Calu3 (cell line): ENCODE measurements at regions of chr3 and their contacts with region 1.

Region 1: GRCh38 chr3:169390271-169391230 is 273.0 kb downstream of the MECOM start:
- DNase-seq: peak; percentile 66
- H3K4me3 Mint-ChIP-seq: peak overlapping the region; percentile 41
- H3K27ac Mint-ChIP-seq: peak overlapping the region; percentile 94
- H3K4me1 Mint-ChIP-seq: peaks cover 47% of the 10 kb centered on the region
- H3K27me3 Mint-ChIP-seq: no peaks in the 10 kb centered on the region
- CTCF ChIP-seq: peak; percentile 50

Region 2: GRCh38 chr3:168865022-168865551 is 525.5 kb before region 1 on chr3:
- CTCF ChIA-PET with region 1: no interaction called
- intact Hi-C with region 1: loop called (anchors 10 kb)
- DNase-seq: peak; percentile 34
- H3K4me3 Mint-ChIP-seq: peak overlapping the region; percentile 49
- H3K27ac Mint-ChIP-seq: no peak overlapping the region
- H3K4me1 Mint-ChIP-seq: peaks cover 90% of the 10 kb centered on the region
- H3K27me3 Mint-ChIP-seq: no peaks in the 10 kb centered on the region
- CTCF ChIP-seq: peak; percentile 89

Region 3: DNA sequence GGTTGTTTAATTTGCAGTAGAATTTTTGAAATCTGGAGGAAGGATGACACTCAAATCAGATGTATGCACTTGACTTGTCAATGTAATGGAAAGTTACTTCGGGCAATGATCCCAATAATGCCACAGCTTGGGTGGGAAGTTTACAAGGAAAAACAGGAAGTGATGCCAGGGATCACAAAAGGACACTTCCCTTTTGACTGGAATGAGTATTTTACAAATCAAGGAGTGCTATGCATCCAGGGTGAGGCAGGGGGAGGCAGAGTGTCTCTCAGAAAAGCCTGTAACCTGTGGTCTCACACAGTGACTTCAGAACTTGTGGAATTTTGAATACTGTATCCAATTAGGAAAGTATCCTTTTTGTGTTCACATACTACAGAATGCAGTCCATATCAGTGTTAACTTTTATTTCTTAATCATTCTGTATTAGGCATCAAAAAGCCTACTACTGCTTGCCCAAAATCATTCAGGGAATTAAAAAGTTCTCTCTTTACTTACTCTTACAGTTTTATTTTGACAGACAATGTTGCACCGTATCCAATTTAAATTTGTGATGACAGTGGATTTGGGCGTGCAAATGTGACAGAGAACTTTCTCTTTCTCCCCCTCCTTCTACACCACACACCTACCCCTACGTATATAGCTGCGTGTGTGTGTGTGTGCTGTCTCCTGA is 172.1 kb before region 1 on chr3:
- CTCF ChIA-PET with region 1: interaction called, 10 read pairs
- intact Hi-C with region 1: loop called (anchors 1 kb)
- DNase-seq: peak; percentile 80
- H3K4me3 Mint-ChIP-seq: no peak overlapping the region
- H3K27ac Mint-ChIP-seq: no peak overlapping the region
- H3K4me1 Mint-ChIP-seq: peaks cover 13% of the 10 kb centered on the region
- H3K27me3 Mint-ChIP-seq: no peaks in the 10 kb centered on the region
- CTCF ChIP-seq: peak; percentile 88

Region 4: GRCh38 chr3:169348929-169349613 is 41.5 kb before region 1 on chr3:
- CTCF ChIA-PET with region 1: interaction called, 12 read pairs
- intact Hi-C with region 1: loop called (anchors 1 kb)
- DNase-seq: peak; percentile 60
- H3K4me3 Mint-ChIP-seq: peak overlapping the region; percentile 65
- H3K27ac Mint-ChIP-seq: peak overlapping the region; percentile 96
- H3K4me1 Mint-ChIP-seq: peaks cover 74% of the 10 kb centered on the region
- H3K27me3 Mint-ChIP-seq: no peaks in the 10 kb centered on the region
- CTCF ChIP-seq: no peak

Region 5: DNA sequence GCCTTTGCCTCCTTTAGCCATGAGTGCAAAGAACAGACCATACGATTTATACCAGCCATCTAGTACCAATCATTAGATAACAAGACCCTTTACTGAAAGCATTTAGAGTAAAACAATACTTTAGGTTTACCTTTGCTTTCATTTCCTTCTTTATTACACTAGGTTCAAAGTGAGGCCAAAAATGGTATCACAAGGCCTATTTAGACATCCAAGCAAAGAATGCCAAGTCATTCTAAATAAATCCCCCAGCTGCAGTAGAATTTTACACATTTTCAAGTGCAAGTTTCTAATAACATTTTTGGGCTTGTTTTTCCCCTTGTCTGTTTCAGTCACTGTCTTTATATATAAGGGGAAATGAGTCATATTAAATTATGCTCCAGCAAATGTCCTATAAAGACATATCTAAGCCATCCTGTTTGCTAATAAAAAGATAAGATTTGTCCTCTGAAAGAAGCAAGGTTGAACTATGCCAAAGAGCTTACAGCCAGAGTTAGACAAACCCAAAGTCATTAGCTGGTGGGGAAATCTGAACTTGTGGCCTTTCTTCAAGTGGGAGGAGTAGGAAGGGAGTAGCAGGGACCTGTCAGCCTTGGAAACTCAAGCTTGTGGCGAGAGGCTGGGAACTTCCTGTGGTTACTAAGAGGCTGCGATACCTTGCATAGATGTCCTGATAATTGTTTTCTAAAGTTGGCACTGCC is 40.3 kb after region 1 on chr3:
- CTCF ChIA-PET with region 1: interaction called, 7 read pairs
- intact Hi-C with region 1: loop called (anchors 2 kb)
- DNase-seq: peak; percentile 72
- H3K4me3 Mint-ChIP-seq: peak overlapping the region; percentile 2
- H3K27ac Mint-ChIP-seq: peak overlapping the region; percentile 73
- H3K4me1 Mint-ChIP-seq: peaks cover 44% of the 10 kb centered on the region
- H3K27me3 Mint-ChIP-seq: no peaks in the 10 kb centered on the region
- CTCF ChIP-seq: no peak

Region 6: DNA sequence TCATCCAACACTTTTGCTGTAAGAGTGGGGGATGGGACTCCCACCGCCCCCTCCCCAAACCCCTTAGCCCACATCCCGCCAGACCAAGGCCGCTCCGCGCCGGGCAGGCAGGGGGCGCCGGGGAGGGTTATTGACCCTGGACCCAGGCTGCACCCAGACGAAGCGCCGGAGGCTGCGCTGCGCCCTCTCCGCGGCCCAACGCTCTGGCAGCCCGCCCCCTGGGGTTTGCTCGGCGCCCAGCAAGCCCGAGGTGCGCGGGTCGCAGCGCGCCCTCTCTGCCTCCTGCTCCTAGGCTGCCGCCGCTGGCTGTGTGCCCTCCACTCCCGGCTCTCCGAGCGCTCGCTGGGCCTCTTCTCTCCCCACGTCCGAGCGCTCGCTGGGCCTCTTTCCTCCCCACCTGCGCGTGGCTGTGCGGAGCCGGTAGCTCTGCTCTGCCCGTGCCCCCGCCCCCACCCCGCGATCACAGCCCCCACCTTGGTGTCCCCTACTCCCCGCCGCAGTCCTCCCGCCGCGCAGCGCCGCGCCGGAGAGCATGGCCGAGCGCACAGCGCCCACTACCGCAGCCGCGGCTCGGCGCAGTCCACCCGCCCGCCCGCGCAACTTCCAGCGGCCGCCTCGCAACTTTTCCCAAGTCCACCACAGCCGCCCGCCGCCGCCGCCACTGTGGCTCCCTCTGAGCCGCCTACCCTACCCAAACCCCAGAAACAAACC is 271.7 kb after region 1 on chr3:
- CTCF ChIA-PET with region 1: interaction called, 24 read pairs
- intact Hi-C with region 1: loop called (anchors 1 kb)
- DNase-seq: peak; percentile 97
- H3K4me3 Mint-ChIP-seq: peak overlapping the region; percentile 79
- H3K27ac Mint-ChIP-seq: peak overlapping the region; percentile 60
- H3K4me1 Mint-ChIP-seq: peaks cover 53% of the 10 kb centered on the region
- H3K27me3 Mint-ChIP-seq: no peaks in the 10 kb centered on the region
- CTCF ChIP-seq: peak; percentile 88

Region 7: DNA sequence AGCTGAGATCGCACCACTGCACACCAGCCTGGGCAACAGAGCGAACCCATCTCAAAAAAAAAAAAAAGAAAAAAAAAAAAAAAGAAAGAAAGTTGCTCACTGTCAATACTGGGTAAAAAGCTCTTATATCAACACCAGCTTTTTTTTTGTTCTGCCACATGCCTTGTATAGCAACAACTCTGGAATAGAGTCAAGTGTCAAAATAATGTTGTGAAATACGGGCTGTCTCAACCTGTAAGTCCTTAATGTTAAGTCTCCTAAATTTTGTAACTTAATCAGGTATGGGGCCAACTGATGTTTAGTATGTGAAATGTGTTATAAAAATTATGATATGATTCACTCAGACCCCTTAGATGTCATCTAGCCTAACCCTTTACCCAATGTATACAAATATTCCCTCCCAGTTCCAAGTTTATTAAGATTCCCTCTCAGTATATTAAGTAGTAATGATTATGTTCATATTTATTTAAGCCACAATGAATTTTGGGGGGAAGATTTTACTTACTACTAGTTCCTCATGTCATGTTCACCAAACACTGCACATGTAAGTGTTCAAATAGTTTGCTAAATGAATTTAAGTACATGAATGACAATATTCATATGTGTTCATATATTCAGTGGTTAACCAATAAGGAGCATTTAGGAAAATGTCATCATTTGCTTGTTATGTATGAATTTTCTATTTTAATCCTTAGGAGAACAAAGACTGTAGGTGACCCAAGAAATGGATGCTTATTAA is 699.5 kb after region 1 on chr3:
- CTCF ChIA-PET with region 1: no interaction called
- intact Hi-C with region 1: no loop called
- DNase-seq: no peak
- H3K4me3 Mint-ChIP-seq: no peak overlapping the region
- H3K27ac Mint-ChIP-seq: peak overlapping the region; percentile 15
- H3K4me1 Mint-ChIP-seq: no peaks in the 10 kb centered on the region
- H3K27me3 Mint-ChIP-seq: no peaks in the 10 kb centered on the region
- CTCF ChIP-seq: no peak